Activated naive CD4-positive, alpha-beta T cell treated with anti-CD3 and anti-CD28 coated beads, Interleukin-2, amount 10 ng/mL, durations not matched to agents 7 days and 5 days (primary cell): ENCODE measurements at regions of chr2 and their contacts with region 1.

Region 1: GRCh38 chr2:39227628-39228412 is 15.9 kb downstream of the CDKL4 start:
- DNase-seq: peak; percentile 90
- H3K4me3 Mint-ChIP-seq: peak overlapping the region; percentile 74
- H3K27ac Mint-ChIP-seq: peak overlapping the region; percentile 96
- H3K4me1 Mint-ChIP-seq: peaks cover 55% of the 10 kb centered on the region
- H3K27me3 Mint-ChIP-seq: no peaks in the 10 kb centered on the region

Region 2: DNA sequence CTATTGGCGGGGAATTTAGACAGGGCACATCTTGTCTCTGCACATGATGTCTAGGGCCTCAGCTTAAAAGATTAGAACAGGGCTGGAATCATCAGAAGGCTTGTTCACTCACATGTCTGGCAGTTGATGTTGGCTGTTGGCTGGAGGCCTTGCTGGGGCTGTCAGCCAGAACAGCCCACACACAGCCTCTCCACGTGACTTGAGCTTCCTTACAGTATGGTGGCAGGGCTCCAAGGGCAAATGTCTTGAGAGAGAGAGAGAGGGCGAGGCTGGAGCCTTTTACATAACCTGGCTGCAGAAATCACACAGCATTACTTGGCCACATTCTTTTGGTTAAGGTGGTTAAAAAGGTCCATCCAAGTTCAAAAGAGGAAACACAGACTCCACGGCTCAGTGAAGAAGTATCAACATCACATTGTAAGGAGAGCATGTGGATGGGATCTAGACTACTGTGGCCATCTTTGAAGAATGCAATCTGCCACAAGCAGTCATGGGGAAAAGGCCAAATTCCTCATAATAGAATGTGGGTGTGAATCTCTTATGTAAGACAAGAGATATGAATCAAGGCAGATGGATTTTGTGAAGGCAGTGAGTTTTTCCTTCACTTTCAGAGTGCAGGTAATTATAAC is 507.1 kb before region 1 on chr2:
- CTCF ChIA-PET with region 1: no interaction called
- DNase-seq: no peak
- H3K4me3 Mint-ChIP-seq: no peak overlapping the region
- H3K27ac Mint-ChIP-seq: peak overlapping the region; percentile 45
- H3K4me1 Mint-ChIP-seq: peaks cover 40% of the 10 kb centered on the region
- H3K27me3 Mint-ChIP-seq: no peaks in the 10 kb centered on the region

Region 3: DNA sequence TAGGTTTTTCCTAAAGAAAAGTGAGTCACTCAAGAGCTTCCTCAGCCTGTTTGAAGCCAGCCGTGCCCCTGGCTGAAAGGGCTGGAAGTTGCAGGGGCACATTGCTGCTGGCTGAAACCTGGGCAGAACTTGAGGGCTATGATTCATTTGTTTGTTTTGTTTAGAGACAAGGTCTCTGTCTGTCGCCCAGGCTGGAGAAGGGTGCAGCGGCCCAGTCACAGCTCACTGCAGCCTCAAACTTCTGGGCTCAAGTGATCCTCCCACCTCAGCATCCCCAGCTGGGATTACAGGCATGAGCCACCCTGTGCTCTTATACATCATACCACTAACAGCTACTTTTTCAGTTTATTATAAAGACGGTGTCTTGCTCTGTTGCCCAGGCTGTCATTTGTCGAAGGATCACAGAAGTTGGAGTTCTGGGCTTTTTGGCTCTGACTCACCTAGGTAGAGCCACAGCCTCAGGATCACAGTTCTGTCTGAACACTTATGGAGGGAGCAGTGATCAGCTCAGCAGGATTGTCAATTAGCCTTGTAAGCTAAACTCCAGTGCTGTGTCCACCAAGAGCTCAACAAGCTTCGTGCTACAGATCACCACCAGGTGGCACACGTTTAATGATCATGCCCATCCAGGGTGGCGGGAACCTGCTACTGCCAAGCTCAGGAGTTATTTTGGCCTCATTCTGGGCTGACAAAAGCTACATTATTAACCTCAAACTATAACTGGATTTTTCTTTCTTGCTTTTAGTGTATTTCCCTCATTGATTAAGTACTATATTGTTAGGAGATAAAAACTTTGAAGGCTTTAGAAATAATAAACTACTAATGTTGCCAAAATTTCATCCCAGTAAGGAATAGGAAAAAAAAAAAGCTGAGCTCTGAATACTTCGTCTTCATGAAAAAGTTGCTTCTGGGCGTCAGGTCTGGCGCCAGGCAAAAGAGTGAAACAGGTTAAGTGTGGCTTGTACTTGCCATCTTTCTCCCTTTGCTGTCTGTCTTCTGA is 280.3 kb before region 1 on chr2:
- CTCF ChIA-PET with region 1: interaction called, 159 read pairs
- DNase-seq: peak; percentile 84
- H3K4me3 Mint-ChIP-seq: no peak overlapping the region
- H3K27ac Mint-ChIP-seq: no peak overlapping the region
- H3K4me1 Mint-ChIP-seq: no peaks in the 10 kb centered on the region
- H3K27me3 Mint-ChIP-seq: peaks cover 13% of the 10 kb centered on the region

Region 4: DNA sequence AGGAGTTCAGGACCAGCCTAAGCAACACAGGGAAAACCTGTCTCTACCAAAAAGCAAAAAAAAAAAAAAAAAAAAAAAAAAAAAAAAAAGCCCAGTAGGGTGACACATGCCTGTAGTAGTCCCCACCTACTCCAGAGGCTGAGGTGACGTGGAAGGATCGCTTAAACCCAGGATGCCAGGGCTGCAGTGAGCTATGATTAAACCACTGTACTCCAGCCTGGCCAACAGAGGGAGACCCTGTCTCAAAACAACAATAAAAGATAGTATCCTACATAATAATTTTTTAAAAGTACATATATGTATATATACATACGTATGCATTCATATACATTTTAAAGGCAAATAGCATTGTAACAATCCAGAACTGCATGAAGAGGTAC is 158.7 kb before region 1 on chr2:
- CTCF ChIA-PET with region 1: interaction called, 18 read pairs
- DNase-seq: no peak
- H3K4me3 Mint-ChIP-seq: no peak overlapping the region
- H3K27ac Mint-ChIP-seq: peak overlapping the region; percentile 37
- H3K4me1 Mint-ChIP-seq: peaks cover 40% of the 10 kb centered on the region
- H3K27me3 Mint-ChIP-seq: no peaks in the 10 kb centered on the region

Region 5: DNA sequence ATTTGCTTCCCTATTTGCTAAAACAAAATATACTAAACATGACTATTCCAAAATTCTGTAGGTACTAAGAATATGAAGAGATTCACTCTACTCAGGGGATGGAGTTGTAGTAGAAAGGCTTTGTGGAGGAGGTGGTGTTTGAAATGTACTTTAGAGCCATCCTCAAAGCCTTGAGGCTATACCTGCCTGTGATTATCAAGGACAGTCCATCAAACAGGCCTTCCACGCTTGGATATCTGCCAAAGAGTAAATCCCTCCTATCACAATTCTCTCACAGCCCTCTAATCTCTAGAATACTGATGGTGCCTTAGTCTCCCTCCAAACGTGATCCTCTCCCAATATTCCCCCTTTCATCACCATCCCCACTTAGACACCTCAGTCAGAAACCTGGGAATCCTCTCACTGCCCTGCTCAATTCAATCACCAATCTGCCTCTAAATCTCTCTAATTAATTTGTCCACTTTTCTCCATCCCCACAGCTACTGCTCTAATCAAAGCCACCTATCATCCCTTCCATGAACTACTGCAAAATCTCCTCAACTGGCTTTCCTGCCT is 120.0 kb before region 1 on chr2:
- CTCF ChIA-PET with region 1: interaction called, 18 read pairs
- DNase-seq: no peak
- H3K4me3 Mint-ChIP-seq: no peak overlapping the region
- H3K27ac Mint-ChIP-seq: no peak overlapping the region
- H3K4me1 Mint-ChIP-seq: peaks cover 70% of the 10 kb centered on the region
- H3K27me3 Mint-ChIP-seq: no peaks in the 10 kb centered on the region

Region 6: GRCh38 chr2:39179974-39180970 is 47.5 kb before region 1 on chr2:
- CTCF ChIA-PET with region 1: no interaction called
- DNase-seq: no peak
- H3K4me3 Mint-ChIP-seq: no peak overlapping the region
- H3K27ac Mint-ChIP-seq: no peak overlapping the region
- H3K4me1 Mint-ChIP-seq: no peaks in the 10 kb centered on the region
- H3K27me3 Mint-ChIP-seq: peaks cover 6% of the 10 kb centered on the region

Region 7: GRCh38 chr2:39216346-39217191 is 11.3 kb before region 1 on chr2:
- CTCF ChIA-PET with region 1: interaction called, 19 read pairs
- DNase-seq: peak; percentile 92
- H3K4me3 Mint-ChIP-seq: peak overlapping the region; percentile 26
- H3K27ac Mint-ChIP-seq: peak overlapping the region; percentile 97
- H3K4me1 Mint-ChIP-seq: peaks cover 78% of the 10 kb centered on the region
- H3K27me3 Mint-ChIP-seq: no peaks in the 10 kb centered on the region